Endothelial cell of umbilical vein (primary cell): ENCODE measurements at regions of chr3 and their contacts with region 1.

Region 1: GRCh38 chr3:125437631-125438435 is 62.7 kb upstream of the ZNF148 start:
- DNase-seq: peak; percentile 54
- H3K4me3 ChIP-seq: no peak overlapping the region
- H3K27ac ChIP-seq: no peak overlapping the region
- H3K4me1 ChIP-seq: no peaks in the 10 kb centered on the region
- H3K27me3 ChIP-seq: no peaks in the 10 kb centered on the region
- CTCF ChIP-seq: peak; percentile 88 to 89
- POLR2A ChIP-seq: no peak

Region 2: GRCh38 chr3:124995460-124995994 is 442.3 kb before region 1 on chr3:
- CTCF ChIA-PET with region 1: interaction called, 13 read pairs
- POLR2A ChIA-PET with region 1: no interaction called
- dilution Hi-C with region 1: no loop called
- intact Hi-C with region 1: loop called (anchors 1 kb)
- DNase-seq: peak; percentile 67
- H3K4me3 ChIP-seq: no peak overlapping the region
- H3K27ac ChIP-seq: no peak overlapping the region
- H3K4me1 ChIP-seq: peaks cover 7% of the 10 kb centered on the region
- H3K27me3 ChIP-seq: no peaks in the 10 kb centered on the region
- CTCF ChIP-seq: peak; percentile 56 to 65
- POLR2A ChIP-seq: no peak

Region 3: GRCh38 chr3:125062888-125063618 is 374.8 kb before region 1 on chr3:
- CTCF ChIA-PET with region 1: no interaction called
- POLR2A ChIA-PET with region 1: no interaction called
- dilution Hi-C with region 1: no loop called
- intact Hi-C with region 1: no loop called
- DNase-seq: peak; percentile 71
- H3K4me3 ChIP-seq: no peak overlapping the region
- H3K27ac ChIP-seq: peak overlapping the region; percentile 25
- H3K4me1 ChIP-seq: peaks cover 20% of the 10 kb centered on the region
- H3K27me3 ChIP-seq: no peaks in the 10 kb centered on the region
- CTCF ChIP-seq: no peak
- POLR2A ChIP-seq: peak; percentile 51

Region 4: DNA sequence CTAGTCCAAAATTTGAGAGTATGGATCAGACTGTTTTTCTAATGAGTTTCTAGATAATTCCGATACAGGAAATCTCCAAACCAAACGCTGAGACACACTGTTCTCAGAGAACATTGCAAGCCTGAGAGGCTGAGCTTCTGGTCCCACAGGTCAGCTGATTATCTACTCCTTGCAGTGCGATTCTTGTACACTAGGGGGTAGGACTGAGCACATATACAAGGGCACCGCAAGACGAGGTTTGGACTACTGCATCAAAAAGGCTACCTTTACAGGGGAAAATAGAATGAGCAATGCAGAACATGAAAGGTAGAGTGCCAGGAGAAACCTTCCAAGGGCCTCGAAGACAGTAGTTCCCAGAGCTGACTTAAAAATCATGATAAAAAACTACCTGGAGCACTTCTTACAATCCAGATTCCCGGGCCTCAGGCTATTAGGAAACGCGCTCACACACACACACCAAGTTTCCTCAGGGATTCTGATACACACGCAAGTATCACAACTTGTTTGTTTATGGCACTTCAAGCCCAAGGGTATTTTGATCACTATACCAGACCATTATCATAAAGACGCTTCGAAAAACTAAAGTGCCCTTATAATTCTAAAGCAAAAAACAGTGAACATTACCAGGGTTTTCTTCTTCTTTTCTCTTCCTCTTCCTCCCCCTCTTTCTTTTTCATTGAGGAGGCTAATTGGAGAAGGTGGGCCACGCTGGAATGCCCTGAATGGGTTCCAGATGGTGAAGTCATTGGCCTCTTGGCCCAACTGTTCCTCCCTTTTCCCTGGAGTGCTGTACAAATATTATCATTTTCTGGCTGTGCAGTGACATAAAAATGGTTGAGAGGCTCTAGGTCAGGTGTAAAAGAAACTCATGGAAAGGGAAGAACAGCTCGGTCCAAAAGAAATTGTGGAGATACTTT is 287.1 kb before region 1 on chr3:
- CTCF ChIA-PET with region 1: interaction called, 23 read pairs
- POLR2A ChIA-PET with region 1: no interaction called
- dilution Hi-C with region 1: no loop called
- intact Hi-C with region 1: loop called (anchors 1 kb)
- DNase-seq: peak; percentile 48
- H3K4me3 ChIP-seq: no peak overlapping the region
- H3K27ac ChIP-seq: no peak overlapping the region
- H3K4me1 ChIP-seq: peaks cover 7% of the 10 kb centered on the region
- H3K27me3 ChIP-seq: no peaks in the 10 kb centered on the region
- CTCF ChIP-seq: peak; percentile 37 to 69
- POLR2A ChIP-seq: no peak

Region 5: GRCh38 chr3:125212509-125213244 is 225.2 kb before region 1 on chr3 and contains the start of gene SLC12A8:
- CTCF ChIA-PET with region 1: no interaction called
- POLR2A ChIA-PET with region 1: no interaction called
- dilution Hi-C with region 1: no loop called
- intact Hi-C with region 1: loop called (anchors 5 kb)
- DNase-seq: no peak
- H3K4me3 ChIP-seq: peak within 1 kb of the TSS; percentile 9 to 42 (median 33)
- H3K27ac ChIP-seq: no peak within 1 kb of the TSS
- H3K4me1 ChIP-seq: peaks cover 7% of the 10 kb centered on the region
- H3K27me3 ChIP-seq: peaks cover 5 to 8% of the 10 kb centered on the region in 2 experiments
- CTCF ChIP-seq: no peak
- POLR2A ChIP-seq: no peak
- total RNA-seq, gene SLC12A8: 0.86 and 0.97 TPM in 2 replicates

Region 6: GRCh38 chr3:125622381-125622788 is 184.6 kb after region 1 on chr3:
- CTCF ChIA-PET with region 1: no interaction called
- POLR2A ChIA-PET with region 1: no interaction called
- dilution Hi-C with region 1: no loop called
- intact Hi-C with region 1: no loop called
- DNase-seq: no peak
- H3K4me3 ChIP-seq: no peak overlapping the region
- H3K27ac ChIP-seq: no peak overlapping the region
- H3K4me1 ChIP-seq: no peaks in the 10 kb centered on the region
- H3K27me3 ChIP-seq: no peaks in the 10 kb centered on the region
- CTCF ChIP-seq: no peak
- POLR2A ChIP-seq: no peak